SK-N-SH (cell line): ENCODE measurements at regions of chr3 and their contacts with region 1.

Region 1: DNA sequence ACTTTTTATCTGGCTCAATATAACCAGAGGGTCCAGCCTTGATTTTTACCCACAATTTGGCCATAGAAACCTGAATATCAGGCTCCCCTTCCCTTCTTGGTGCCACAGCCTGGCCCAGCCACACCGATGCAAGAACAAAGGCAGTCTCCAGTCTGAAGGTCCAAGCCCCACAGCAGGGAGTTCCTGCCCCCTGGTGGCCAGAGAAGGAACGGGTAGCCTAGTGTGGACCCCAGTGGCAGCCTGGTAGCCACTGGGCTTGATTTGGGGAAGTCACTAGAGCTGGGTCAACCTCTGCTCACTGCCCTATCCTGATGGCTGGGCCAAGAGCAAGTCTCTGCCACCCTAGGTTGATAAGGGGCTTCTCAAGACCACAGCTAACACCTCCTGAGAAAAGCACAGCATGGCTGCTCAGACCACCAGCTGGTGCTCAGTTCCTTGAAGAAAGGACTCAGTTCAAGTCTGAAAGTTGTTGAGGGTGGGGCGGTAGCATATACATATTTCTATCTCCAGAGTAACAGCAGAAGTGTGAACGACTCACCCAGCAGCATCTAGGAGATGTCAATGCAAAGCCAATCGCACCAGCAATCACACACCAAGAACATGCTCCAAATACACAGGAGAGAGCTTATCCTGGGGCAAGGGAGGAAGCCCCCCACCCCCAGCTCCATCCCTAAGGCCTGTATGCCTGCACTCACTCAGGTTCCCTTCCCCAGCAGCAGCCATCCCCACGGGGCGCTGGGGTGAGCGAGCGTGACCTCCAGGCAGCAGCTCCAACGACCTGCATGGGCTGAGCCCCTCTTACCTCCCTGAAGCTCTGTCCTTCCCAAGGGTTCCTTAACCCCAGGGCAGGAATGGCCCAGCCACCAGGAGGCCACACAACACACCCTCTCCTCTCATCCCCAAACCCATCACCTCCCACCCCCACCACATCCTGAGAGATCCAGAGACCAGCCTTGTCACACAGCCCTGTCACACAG is 7.6 kb downstream of the PFKFB4 start:
- DNase-seq: peak; percentile 86
- H3K4me3 ChIP-seq: no peak overlapping the region; a peak in 1 of 4 replicates
- H3K27ac ChIP-seq: no peak overlapping the region; a peak in 1 of 4 replicates
- H3K4me1 ChIP-seq: peaks cover 0 to 7% of the 10 kb centered on the region in 2 experiments; a peak in 1 of 4 replicates
- H3K27me3 ChIP-seq: no peaks in the 10 kb centered on the region
- CTCF ChIP-seq: peak; percentile 95
- EP300 ChIP-seq: no peak
- RAD21 ChIP-seq: peak; percentile 93

Region 2: DNA sequence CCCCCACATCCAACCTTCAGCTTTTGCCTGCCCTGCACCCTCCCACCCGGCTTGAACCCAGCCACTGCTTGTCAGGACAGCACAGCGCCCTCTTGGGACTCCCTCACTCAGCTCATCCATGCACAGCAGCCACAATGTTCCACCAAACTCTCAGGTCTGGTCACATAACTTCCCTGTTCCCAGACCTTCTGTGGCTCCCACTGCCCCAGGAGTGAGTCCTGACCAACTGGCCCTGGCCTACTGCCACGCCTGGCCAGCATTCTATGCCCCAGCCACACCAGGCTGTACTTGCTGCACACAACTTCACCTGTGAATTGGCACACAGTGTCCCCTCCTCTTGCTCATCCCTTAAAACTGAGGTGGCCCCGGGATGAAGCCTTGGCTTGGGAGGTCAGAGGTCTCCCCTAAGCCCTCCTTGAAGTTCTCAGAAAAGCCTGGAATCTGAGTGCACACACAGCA is 140.2 kb before region 1 on chr3:
- CTCF ChIA-PET with region 1: no interaction called
- POLR2A ChIA-PET with region 1: no interaction called
- DNase-seq: peak; percentile 24
- H3K4me3 ChIP-seq: no peak overlapping the region
- H3K27ac ChIP-seq: no peak overlapping the region
- H3K4me1 ChIP-seq: no peaks in the 10 kb centered on the region
- H3K27me3 ChIP-seq: no peaks in the 10 kb centered on the region
- CTCF ChIP-seq: no peak
- EP300 ChIP-seq: no peak
- RAD21 ChIP-seq: no peak

Region 3: DNA sequence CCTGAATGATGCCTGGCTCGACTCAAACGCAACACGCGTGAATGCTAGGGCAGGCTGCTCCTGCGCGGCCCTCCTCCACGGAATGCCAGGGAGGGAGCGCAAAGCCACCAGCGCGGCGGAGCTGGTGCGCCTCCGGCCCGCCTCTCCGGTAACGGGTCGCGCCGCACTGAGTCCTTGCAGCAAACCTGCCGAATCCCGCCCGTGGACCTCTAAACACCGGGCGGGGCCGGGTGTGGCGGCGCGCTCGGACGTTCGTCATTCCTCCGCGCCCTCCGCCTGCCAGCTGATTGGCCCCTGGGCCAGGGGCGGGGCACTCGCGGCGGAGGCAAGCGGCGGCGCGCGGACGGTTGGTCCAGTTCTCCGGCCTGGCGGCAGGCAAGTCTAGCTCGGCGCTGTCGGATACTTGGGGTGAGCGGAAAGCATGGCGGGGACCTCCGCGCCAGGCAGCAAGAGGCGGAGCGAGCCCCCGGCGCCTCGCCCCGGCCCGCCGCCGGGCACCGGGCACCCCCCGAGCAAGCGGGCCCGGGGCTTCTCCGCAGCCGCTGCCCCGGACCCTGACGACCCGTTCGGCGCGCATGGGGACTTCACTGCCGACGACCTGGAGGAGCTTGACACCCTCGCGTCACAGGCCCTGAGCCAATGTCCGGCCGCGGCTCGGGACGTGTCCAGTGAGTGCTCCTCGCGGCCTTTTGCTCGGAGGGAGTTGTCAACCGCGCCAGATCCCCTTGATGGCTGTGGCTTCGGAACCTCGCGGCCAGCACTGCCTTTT is 102.4 kb before region 1 on chr3 and contains the start of gene ATRIP:
- CTCF ChIA-PET with region 1: interaction called, 17 read pairs
- POLR2A ChIA-PET with region 1: interaction called, 6 read pairs
- DNase-seq: peak; percentile 98
- H3K4me3 ChIP-seq: peak within 1 kb of the TSS; percentile 77 to 97
- H3K27ac ChIP-seq: peak within 1 kb of the TSS; percentile 68 to 74
- H3K4me1 ChIP-seq: peaks cover 5 to 18% of the 10 kb centered on the region in 2 experiments
- H3K27me3 ChIP-seq: no peaks in the 10 kb centered on the region
- CTCF ChIP-seq: no peak
- EP300 ChIP-seq: no peak
- RAD21 ChIP-seq: no peak
- polyA plus RNA-seq, gene ATRIP: 5.6 and 6.5 TPM in 2 replicates

Region 4: DNA sequence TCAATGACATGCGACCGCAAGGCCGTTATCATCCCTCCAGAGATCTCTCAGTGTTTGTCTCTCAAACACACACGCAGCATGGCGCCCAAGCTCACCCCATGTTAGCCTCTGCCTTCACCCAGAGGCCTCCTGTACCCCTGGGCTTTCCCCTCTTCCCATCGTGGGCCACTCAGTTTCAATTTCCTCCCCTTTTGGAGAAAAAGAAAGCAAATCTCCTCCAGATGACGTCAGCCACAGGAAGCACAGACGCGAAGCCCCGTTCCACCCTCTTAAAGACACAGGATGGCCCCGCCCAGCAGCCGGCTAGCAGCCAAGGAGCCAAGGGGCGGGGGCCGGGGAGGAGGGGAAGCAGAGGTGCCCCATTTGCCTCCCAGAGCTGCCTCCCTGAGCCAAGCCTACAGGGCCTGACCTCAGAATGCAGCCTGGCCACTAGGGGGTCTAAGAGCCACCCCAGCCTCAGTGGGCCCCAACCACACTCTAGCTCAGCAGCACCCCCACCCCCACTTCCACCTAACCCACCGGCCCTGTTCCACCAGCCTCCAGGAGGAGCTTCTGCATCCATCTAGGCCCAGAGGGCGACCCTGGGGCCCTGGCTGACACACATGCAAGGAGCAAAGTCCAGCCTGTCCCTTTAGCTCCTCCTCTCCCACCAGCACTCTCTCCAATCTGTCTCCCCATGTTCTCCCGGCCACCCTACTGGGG is 76.0 kb before region 1 on chr3:
- CTCF ChIA-PET with region 1: interaction called, 136 read pairs
- POLR2A ChIA-PET with region 1: no interaction called
- DNase-seq: peak; percentile 82
- H3K4me3 ChIP-seq: peak overlapping the region; percentile 61 to 65
- H3K27ac ChIP-seq: peak overlapping the region; percentile 80 to 87
- H3K4me1 ChIP-seq: peaks cover 0 to 28% of the 10 kb centered on the region in 2 experiments; a peak in 1 of 4 replicates
- H3K27me3 ChIP-seq: no peaks in the 10 kb centered on the region
- CTCF ChIP-seq: peak; percentile 59
- EP300 ChIP-seq: no peak
- RAD21 ChIP-seq: peak; percentile 11; the same call in 1 of the 2 replicates

Region 5: DNA sequence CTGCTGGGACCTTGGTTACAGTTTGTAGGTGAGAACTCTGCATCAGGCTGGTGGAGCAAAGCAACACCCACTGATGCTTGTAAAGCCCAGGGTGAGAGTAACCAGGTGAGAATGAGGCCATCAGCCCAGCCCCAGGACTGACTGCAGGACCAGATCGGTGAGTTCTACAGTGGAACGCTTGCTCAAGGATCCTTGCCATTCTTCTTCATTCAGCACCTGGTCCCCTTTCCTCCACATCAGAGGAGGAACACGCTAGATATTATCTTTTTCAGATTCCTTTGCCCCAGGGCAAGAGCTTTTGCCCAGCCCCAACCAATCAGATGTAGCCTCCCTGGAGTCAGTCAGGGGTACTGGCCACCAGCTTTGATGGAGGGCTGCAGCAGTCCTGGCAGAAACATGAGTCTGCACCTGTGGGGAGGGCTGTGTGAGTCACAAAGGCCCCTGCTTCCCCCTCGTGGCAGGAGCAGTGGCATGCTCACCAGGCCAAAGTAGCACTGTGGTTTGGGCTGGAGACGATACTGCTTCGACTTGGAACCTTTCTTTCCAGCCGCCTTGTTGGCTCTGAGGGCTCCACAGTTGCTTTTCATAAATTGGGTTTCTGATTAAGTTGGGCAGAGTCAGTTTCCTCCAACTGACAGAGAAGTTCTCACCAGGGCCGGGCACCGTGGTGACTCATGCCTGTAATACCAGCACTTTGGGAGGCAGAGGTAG is 41.5 kb before region 1 on chr3:
- CTCF ChIA-PET with region 1: interaction called, 12 read pairs
- POLR2A ChIA-PET with region 1: no interaction called
- DNase-seq: peak; percentile 86
- H3K4me3 ChIP-seq: 0 out of 4 replicates have a peak overlapping the region, but pooled peaks of 1 of the 2 experiments have one; percentile 1
- H3K27ac ChIP-seq: peak overlapping the region; percentile 29 to 58
- H3K4me1 ChIP-seq: peaks cover 14 to 30% of the 10 kb centered on the region in 2 experiments; a peak in 2 of 4 replicates
- H3K27me3 ChIP-seq: no peaks in the 10 kb centered on the region
- CTCF ChIP-seq: peak; percentile 58
- EP300 ChIP-seq: peak in 1 of 2 experiments; percentile 25; a peak in 1 of 4 replicates
- RAD21 ChIP-seq: peak; percentile 89